Caco-2 (cell line): ENCODE measurements at regions of chr3 and their contacts with region 1.

Region 1: DNA sequence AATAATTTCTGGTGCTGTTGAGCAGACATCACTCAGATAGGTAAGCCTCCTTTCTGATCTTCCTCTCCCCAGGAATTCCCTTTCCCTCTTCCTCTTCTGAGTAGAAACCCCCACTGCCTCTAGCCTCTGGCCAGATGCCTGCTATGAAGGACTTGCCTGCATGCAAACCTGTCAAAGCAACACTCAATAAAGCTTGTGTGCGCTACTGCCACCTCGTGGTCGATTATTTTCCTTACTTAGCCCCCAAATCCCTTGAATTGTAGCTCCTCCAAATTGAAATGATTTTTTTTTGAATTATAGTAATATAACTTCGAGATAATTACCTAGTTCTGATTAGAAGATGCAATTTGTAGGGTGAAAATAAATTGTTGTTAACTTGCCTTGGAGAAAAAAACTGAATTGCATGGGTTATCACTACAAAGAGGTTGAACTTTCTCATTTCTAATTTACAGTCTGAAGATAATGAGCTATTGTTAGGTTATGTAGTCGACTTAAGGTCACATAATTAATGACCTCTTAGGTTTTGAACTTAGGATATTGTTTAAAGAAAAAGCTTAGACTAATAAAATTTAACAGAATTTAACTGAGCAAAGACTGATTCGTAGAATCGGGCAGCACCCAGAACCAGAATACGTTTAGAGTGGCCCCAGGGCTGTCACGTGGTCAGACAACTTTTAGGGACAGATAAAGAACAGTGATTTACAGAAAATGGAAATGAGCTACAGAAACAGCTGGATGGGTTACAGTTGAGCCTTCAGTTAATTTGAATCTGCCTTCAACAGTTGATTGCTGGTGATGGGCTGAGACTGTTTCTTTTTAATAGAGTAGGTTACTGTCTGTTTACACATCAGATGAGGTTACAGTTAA is 269.3 kb downstream of the ARPP21 start:
- DNase-seq: peak; percentile 62 to 68
- H3K4me3 ChIP-seq: no peak overlapping the region
- H3K4me3 Mint-ChIP-seq: no peak overlapping the region
- H3K27ac Mint-ChIP-seq: no peak overlapping the region
- H3K4me1 ChIP-seq: no peaks in the 10 kb centered on the region
- H3K4me1 Mint-ChIP-seq: peaks cover 7% of the 10 kb centered on the region
- H3K27me3 ChIP-seq: no peaks in the 10 kb centered on the region
- H3K27me3 Mint-ChIP-seq: peaks cover 2% of the 10 kb centered on the region
- CTCF ChIP-seq: peak; percentile 65

Region 2: DNA sequence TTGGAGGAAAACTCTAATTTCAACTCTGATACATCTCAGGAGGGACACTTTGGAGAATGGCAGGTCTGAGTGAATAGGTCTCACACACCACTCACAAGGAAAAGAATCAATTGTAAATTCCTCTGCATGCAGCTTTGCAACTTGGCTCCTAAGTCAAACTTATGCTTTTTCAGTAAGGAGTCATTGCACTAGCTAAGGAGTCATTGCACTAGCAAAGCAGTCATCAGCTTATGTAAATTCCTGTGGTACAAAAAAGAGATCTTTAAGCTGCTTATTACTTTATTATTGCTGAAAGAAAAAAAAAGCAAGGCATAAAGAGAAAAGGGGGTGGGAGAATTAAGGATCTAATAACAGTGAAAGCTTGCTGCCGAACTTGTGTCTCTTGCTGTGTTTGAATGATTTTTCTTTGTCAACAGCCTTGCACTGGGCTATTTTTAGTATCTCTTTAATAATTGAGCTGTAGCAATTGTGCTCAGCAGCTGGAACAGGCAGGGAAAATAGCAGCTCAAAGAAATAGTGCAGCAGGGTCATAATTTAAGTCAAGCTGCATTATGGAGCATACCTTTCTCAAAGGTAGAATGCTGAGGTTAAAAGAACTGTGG is 423.6 kb before region 1 on chr3:
- CTCF ChIA-PET with region 1: no interaction called
- POLR2A ChIA-PET with region 1: no interaction called
- intact Hi-C with region 1: loop called (anchors 1 kb)
- DNase-seq: no peak
- H3K4me3 ChIP-seq: no peak overlapping the region
- H3K4me3 Mint-ChIP-seq: no peak overlapping the region
- H3K27ac Mint-ChIP-seq: no peak overlapping the region
- H3K4me1 ChIP-seq: no peaks in the 10 kb centered on the region
- H3K4me1 Mint-ChIP-seq: peaks cover 7% of the 10 kb centered on the region
- H3K27me3 ChIP-seq: no peaks in the 10 kb centered on the region
- H3K27me3 Mint-ChIP-seq: peaks cover 4% of the 10 kb centered on the region
- CTCF ChIP-seq: no peak

Region 3: DNA sequence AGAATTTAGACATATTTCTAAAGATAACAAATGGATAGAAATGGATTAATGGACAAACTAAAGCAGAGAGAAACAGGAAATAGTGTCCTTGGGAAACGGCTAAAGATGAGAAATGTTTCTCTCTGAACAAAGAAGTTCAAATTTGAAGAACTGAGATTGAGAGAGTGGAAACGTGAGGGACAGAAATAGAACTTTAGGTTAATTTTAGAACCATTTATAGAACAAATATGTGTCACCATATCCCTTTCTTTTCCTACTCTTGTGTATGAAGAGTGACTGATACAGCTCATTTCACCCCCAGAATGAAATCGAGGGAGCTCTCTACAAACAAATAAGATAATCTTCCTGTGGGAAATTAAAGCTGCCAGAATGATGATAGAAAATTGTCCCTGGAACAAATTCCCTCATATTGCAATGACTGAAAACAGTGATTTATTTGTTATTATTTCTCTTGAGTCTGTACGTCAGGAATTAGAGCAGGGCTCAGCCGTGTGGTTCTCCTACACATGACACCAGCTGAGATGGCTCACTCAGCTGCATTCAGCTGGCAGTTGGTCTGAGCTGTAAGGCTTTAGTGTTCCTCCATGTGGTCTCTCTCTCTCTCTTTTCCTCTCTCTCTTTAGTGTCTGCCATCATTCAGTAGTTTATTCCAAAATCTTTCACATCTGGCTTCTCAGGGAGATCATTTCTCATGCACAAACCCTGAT is 315.9 kb before region 1 on chr3:
- CTCF ChIA-PET with region 1: no interaction called
- POLR2A ChIA-PET with region 1: no interaction called
- intact Hi-C with region 1: no loop called
- DNase-seq: no peak
- H3K4me3 ChIP-seq: no peak overlapping the region
- H3K4me3 Mint-ChIP-seq: no peak overlapping the region
- H3K27ac Mint-ChIP-seq: no peak overlapping the region
- H3K4me1 ChIP-seq: no peaks in the 10 kb centered on the region
- H3K4me1 Mint-ChIP-seq: no peaks in the 10 kb centered on the region
- H3K27me3 ChIP-seq: no peaks in the 10 kb centered on the region; the same call in 1 of the 2 replicates
- H3K27me3 Mint-ChIP-seq: peaks cover 3% of the 10 kb centered on the region
- CTCF ChIP-seq: no peak

Region 4: GRCh38 chr3:35673017-35673416 is 235.6 kb before region 1 on chr3:
- CTCF ChIA-PET with region 1: interaction called, 5 read pairs
- POLR2A ChIA-PET with region 1: no interaction called
- intact Hi-C with region 1: loop called (anchors 1 kb)
- DNase-seq: no peak
- H3K4me3 ChIP-seq: no peak overlapping the region
- H3K4me3 Mint-ChIP-seq: no peak overlapping the region
- H3K27ac Mint-ChIP-seq: no peak overlapping the region
- H3K4me1 ChIP-seq: no peaks in the 10 kb centered on the region
- H3K4me1 Mint-ChIP-seq: no peaks in the 10 kb centered on the region
- H3K27me3 ChIP-seq: no peaks in the 10 kb centered on the region
- H3K27me3 Mint-ChIP-seq: peaks cover 2% of the 10 kb centered on the region
- CTCF ChIP-seq: no peak

Region 5: DNA sequence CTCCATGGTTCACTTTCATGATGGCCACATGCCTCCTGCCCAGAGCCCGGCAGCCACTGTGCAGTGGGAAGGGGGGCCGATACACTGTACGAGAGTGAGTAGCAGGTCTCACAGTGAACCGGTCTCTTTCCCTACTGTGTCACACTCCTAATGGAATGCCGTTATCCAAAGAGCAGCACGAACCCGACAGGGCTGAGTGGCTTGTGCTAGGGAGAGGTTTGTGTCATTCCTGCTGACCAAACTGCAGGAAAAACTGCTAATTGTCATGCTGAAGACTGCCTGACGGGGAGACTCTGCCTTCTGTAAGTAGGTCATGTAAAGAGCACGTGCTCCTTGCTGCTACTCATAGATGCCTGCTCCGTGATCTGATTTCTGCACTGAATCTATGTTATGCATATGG is 164.2 kb before region 1 on chr3:
- CTCF ChIA-PET with region 1: no interaction called
- POLR2A ChIA-PET with region 1: no interaction called
- intact Hi-C with region 1: loop called (anchors 10 kb)
- DNase-seq: no peak
- H3K4me3 ChIP-seq: no peak overlapping the region
- H3K4me3 Mint-ChIP-seq: no peak overlapping the region
- H3K27ac Mint-ChIP-seq: no peak overlapping the region
- H3K4me1 ChIP-seq: no peaks in the 10 kb centered on the region
- H3K4me1 Mint-ChIP-seq: no peaks in the 10 kb centered on the region
- H3K27me3 ChIP-seq: no peaks in the 10 kb centered on the region
- H3K27me3 Mint-ChIP-seq: peaks cover 7% of the 10 kb centered on the region
- CTCF ChIP-seq: no peak

Region 6: GRCh38 chr3:35800960-35801459 is 107.6 kb before region 1 on chr3:
- CTCF ChIA-PET with region 1: no interaction called
- POLR2A ChIA-PET with region 1: no interaction called
- intact Hi-C with region 1: loop called (anchors 5 kb)
- DNase-seq: peak; percentile 53 to 54
- H3K4me3 ChIP-seq: no peak overlapping the region
- H3K4me3 Mint-ChIP-seq: no peak overlapping the region
- H3K27ac Mint-ChIP-seq: peak overlapping the region; percentile 32
- H3K4me1 ChIP-seq: peaks cover 23% of the 10 kb centered on the region
- H3K4me1 Mint-ChIP-seq: peaks cover 13% of the 10 kb centered on the region
- H3K27me3 ChIP-seq: no peaks in the 10 kb centered on the region
- H3K27me3 Mint-ChIP-seq: no peaks in the 10 kb centered on the region
- CTCF ChIP-seq: no peak

Region 7: DNA sequence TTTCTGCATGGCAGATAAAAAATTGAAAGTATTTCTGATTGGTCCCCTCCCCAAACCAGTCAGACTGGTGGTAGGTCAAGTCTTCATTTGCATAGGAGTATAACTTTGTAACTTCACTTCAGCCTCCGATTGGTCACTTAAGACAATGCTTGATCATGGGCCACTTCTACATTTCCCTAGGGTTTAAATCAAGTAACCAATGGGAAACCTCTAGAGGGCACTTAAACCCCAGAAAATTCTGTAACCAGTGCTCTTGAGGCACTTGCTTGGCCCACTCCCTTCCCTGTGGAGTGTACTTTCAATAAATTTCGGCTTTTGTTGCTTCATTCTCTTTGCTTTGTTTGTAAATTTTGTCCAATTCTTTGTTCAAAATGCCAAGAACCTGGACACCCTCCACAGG is 43.7 kb before region 1 on chr3:
- CTCF ChIA-PET with region 1: interaction called, 3 read pairs
- POLR2A ChIA-PET with region 1: no interaction called
- intact Hi-C with region 1: loop called (anchors 2 kb)
- DNase-seq: no peak
- H3K4me3 ChIP-seq: no peak overlapping the region
- H3K4me3 Mint-ChIP-seq: no peak overlapping the region
- H3K27ac Mint-ChIP-seq: no peak overlapping the region
- H3K4me1 ChIP-seq: peaks cover 30% of the 10 kb centered on the region
- H3K4me1 Mint-ChIP-seq: peaks cover 5% of the 10 kb centered on the region
- H3K27me3 ChIP-seq: no peaks in the 10 kb centered on the region
- H3K27me3 Mint-ChIP-seq: no peaks in the 10 kb centered on the region
- CTCF ChIP-seq: no peak